GM13976 (cell line): ENCODE measurements at regions of chr14 and their contacts with region 1.

Region 1: DNA sequence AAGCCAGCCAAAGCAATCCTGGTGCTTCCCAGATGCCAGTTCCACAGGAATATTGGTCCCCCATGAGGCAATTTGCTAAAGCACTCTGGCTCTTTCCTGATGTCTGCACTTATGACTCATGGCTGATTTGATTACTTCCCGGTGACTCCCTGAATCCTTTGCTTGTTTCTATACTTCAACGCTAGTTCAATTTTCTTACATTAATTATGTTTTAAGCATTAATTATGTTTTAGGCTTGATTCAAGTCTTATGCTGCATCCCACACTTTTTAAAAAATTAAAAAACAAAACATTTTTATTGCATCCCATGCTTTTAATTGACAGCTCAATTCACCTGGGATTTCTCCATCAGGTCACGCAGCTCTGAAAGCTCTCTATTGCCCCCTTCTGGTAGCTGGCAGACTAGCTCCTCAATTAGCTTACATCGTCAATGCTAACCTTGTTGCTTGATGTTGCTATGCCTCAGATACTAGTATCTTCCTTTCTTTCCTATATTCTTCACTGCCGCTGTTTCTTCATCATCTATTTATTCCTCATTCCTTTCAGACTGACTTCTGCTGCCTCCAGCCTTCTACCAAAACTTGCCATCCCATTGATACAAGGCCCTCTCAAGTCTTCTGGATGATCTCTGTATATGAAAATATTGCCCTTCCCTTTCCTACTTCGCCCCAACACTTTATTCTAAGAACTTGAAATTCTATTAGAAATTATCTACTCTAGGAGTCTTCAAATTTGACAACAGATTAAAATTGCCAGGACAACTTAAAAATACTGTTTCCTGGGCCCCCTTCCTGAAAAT is 32.0 kb downstream of the TSHR start:
- DNase-seq: peak; percentile 70
- CTCF ChIP-seq: peak; percentile 77

Region 2: DNA sequence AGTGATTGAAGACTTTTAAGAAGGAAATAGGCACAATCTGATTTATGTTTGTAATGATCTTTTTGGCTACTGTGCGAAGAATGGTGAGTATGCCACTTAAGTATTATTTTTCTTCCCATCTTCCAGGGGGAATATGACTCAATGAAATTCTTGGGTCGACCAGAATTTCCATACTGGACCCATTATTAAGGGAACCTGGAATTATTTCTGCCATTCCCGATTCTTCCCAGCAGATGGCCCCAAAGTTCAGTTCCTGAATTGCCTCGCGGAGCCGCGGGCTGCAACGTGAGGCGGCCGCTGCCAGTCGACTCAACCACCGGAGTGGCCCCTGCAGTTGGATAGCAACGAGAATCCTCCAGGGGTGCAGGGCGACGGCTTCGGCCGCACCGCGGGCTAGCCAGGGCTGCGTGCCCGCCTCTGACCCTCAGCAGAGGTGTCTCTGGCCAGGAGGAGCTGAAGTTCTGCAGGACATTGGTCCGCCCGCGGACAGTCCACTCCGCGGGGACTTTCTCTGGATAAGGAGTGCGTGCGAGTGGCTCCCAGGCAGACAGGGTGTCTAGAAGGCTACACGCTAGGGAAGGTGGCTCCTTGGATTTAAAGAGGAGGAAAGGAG is 32.6 kb before region 1 on chr14:
- in situ Hi-C with region 1: loop called (anchors 5 kb)
- DNase-seq: peak; percentile 83
- CTCF ChIP-seq: peak; percentile 71